Dorsolateral prefrontal cortex (tissue), 120 donors: ENCODE measurements at regions of chrX and their contacts with region 1.

Region 1: GRCh38 chrX:129726307-129727111 is 12.3 kb upstream of the XPNPEP2 start:
- DNase-seq: peak in 9 of 10 donors; percentile 21 to 80 (median 73)
- H3K4me3 ChIP-seq: no peak overlapping the region
- H3K27ac ChIP-seq: peak overlapping the region in 3 of 59 donors; percentile 2 to 26 (median 13)
- H3K27me3 ChIP-seq: peaks cover 0 to 76% (median 21%) of the 10 kb centered on the region in 45 donors
- CTCF ChIP-seq: peak; percentile 20 to 95 (median 82)

Region 2: GRCh38 chrX:129606918-129607317 is 119.6 kb before region 1 on chrX:
- intact Hi-C with region 1: loop called (anchors 2 kb)
- DNase-seq: peak in 5 of 10 donors; percentile 41 to 58 (median 54)
- H3K4me3 ChIP-seq: no peak overlapping the region
- H3K27ac ChIP-seq: no peak overlapping the region
- H3K27me3 ChIP-seq: peaks cover 0 to 72% (median 14%) of the 10 kb centered on the region in 45 donors
- CTCF ChIP-seq: peak; percentile 29 to 92 (median 83)

Region 3: GRCh38 chrX:129637217-129638109 is 89.0 kb before region 1 on chrX:
- intact Hi-C with region 1: loop called (anchors 1 to 2 kb)
- DNase-seq: peak; percentile 69 to 93 (median 83)
- H3K4me3 ChIP-seq: no peak overlapping the region
- H3K27ac ChIP-seq: peak overlapping the region in 2 of 59 donors; percentile 12 to 13
- H3K27me3 ChIP-seq: peaks cover 0 to 69% (median 3%) of the 10 kb centered on the region in 45 donors
- CTCF ChIP-seq: peak; percentile 73 to 99 (median 95)

Region 4: GRCh38 chrX:129654419-129655165 is 71.9 kb before region 1 on chrX and contains the start of gene APLN:
- intact Hi-C with region 1: loop called in 1 of 2 experiments (anchors 5 kb)
- DNase-seq: peak in 7 of 10 donors; percentile 41 to 66 (median 58)
- H3K4me3 ChIP-seq: peak within 1 kb of the TSS; percentile 26 to 71 (median 55)
- H3K27ac ChIP-seq: peak within 1 kb of the TSS in 21 of 59 donors; percentile 13 to 63 (median 27)
- H3K27me3 ChIP-seq: peaks cover 0 to 84% (median 10%) of the 10 kb centered on the region in 45 donors
- CTCF ChIP-seq: peak in 1 of 56 donors; percentile 8
- total RNA-seq, gene APLN: 3.5 to 69.1 (median 14.9) TPM

Region 5: DNA sequence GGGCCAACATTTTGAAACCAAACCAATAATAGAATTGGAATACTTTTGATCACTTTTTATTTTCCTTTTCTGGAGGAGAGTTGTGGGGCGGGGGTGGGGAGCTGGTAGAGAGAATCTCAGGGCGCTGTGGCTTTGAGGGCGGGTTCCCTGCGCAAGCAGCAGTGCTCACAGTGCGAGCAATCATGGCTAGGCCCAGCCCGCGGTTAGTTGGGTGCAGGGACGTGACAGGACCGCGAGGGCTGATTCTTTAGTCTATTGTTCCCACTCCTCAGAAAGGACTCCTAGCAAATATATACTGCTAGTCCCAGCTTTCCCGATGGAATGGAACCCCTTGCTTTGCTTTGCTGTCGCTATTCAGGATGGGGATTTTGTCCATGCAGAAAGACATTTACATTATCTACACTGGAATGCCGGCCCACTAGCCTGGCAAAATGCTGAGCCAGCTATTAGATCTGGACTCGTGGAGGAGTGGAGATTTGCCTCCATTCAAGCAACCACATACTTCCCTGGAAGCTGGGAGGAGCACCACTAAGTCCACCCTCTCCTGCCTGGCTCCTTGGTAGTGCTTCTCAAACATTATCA is 47.8 kb before region 1 on chrX:
- intact Hi-C with region 1: loop called in 1 of 2 experiments (anchors 5 kb)
- DNase-seq: peak in 1 of 10 donors; percentile 11
- H3K4me3 ChIP-seq: peak overlapping the region; percentile 16 to 68 (median 49)
- H3K27ac ChIP-seq: peak overlapping the region in 51 of 59 donors; percentile 20 to 91 (median 83)
- H3K27me3 ChIP-seq: peaks cover 0 to 54% (median 11%) of the 10 kb centered on the region in 45 donors
- CTCF ChIP-seq: peak in 3 of 56 donors; percentile 2 to 34 (median 4)